GM23248 (cell line): ENCODE measurements at regions of chr17 and their contacts with region 1.

Region 1: DNA sequence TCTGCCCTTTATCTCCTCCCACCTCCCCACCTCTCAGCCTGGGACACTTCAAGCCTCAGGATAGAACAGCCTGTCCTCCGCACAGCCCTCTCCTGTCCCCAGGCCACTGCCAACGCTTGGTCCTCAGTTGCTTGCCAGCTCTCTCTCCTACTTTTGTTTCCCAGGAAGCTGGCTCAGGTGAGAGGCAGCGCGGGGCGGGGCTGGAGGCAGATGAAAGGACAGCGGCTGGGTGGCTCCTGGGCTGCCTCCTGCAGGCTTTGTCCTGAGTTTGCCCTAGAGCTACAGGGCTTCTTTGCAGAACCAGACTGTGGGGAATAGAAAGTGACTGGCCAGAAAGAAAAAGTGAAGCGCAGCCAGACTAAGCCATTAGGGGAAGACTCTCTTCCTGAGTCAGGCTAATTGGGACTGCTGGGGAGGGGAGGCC is 48.2 kb upstream of the CDC42EP4 start:
- DNase-seq: no peak
- H3K4me3 ChIP-seq: no peak overlapping the region
- H3K27ac ChIP-seq: no peak overlapping the region
- H3K4me1 ChIP-seq: no peaks in the 10 kb centered on the region
- H3K27me3 ChIP-seq: no peaks in the 10 kb centered on the region; the same call in 1 of the 2 replicates

Region 2: GRCh38 chr17:72592242-72592966 is 767.6 kb before region 1 on chr17:
- in situ Hi-C with region 1: loop called (anchors 25 kb)
- DNase-seq: peak; percentile 90
- H3K4me3 ChIP-seq: peak overlapping the region; percentile 81
- H3K27ac ChIP-seq: peak overlapping the region; percentile 40
- H3K4me1 ChIP-seq: peaks cover 9% of the 10 kb centered on the region
- H3K27me3 ChIP-seq: no peaks in the 10 kb centered on the region

Region 3: DNA sequence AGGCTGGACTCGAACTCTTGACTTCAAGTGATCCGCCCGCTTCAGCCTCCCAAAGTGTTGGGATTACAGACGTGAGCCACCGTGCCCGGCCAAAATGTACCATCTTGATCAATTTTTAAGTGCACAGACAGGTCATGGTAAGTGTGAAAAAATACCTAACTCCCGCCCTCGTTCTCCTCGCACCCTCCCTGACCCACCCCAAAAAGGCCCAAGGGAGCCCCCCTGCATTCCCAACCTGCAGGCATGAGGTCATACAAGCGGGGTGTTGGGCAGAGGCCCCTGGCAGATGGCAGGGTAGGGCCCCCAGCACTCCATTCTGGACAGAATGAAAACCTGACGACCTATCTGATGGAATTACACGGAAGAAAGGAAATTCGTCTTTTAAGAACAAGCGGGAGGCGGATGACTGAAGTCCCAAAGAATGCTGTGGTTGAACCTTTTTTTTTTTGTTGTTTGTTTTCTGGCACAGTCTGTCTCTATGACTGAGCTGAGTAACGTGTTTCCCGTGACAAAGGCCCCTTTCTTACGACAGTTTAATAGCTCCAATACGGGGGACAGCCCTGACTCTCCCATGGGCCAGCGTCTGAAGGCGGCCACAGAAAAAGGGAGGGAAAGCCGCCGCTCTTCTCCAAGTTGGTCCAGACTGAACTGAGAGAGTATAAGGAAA is 644.0 kb before region 1 on chr17:
- in situ Hi-C with region 1: loop called (anchors 25 kb)
- DNase-seq: peak; percentile 95
- H3K4me3 ChIP-seq: peak overlapping the region; percentile 54
- H3K27ac ChIP-seq: peak overlapping the region; percentile 80
- H3K4me1 ChIP-seq: peaks cover 3% of the 10 kb centered on the region
- H3K27me3 ChIP-seq: no peaks in the 10 kb centered on the region